CD4-positive, alpha-beta T cell (primary cell): ENCODE measurements at regions of chr11 and their contacts with region 1.

Region 1: GRCh38 chr11:67353317-67354074 is at the start of gene POLD4:
- DNase-seq: peak; percentile 90 to 98 (median 96)
- ATAC-seq: peak; percentile 84
- H3K4me3 ChIP-seq: peak within 1 kb of the TSS; percentile 78
- H3K4me3 Mint-ChIP-seq: peak within 1 kb of the TSS; percentile 98
- H3K27ac ChIP-seq: peak within 1 kb of the TSS; percentile 94 to 100
- H3K27ac Mint-ChIP-seq: peak within 1 kb of the TSS; percentile 99
- H3K4me1 ChIP-seq: peaks cover 67% of the 10 kb centered on the region
- H3K4me1 Mint-ChIP-seq: peaks cover 59% of the 10 kb centered on the region
- H3K27me3 ChIP-seq: no peaks in the 10 kb centered on the region
- H3K27me3 Mint-ChIP-seq: no peaks in the 10 kb centered on the region
- CTCF ChIP-seq: no peak
- total RNA-seq, gene POLD4: 31.7 to 39.5 TPM

Region 2: DNA sequence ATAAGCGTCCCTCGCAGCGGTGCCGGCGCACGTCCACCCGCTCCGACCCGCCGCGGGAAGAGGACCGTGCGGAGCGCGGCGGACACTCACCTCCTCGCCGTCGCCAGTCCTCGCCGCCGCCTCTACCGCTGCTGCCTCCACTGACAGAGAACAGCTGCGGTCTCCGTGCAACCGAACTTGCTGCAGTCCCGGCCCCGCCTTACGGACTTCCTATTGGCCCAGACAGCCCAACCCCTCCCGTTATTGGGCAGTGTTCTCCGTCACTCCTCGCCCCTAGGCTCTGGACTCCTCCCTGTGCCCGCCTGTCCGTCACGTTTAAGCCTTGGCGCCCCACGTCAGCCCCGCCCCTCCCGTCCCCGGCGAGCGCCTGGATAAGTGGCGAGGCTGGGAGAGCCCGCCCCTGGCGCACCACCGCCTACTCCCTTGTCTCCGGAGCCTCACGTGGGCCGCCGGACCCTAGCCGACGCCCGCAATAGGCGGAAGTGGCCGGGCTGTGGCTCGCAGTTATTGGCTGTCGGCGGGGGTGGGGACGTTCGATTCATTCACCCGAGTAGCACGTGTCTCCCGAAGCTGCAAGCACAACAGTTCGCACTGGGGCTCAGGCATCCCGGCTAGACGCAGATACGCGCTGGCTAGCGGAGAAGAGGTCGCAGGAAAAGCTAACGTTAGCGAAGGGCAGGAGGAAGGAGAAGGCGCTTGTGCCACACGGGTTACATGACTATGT is 395.1 kb before region 1 on chr11 and contains the start of gene PC:
- CTCF ChIA-PET with region 1: no interaction called
- POLR2A ChIA-PET with region 1: no interaction called
- intact Hi-C with region 1: loop called in 1 of 2 experiments (anchors 10 kb)
- DNase-seq: peak; percentile 91 to 99 (median 96)
- ATAC-seq: peak; percentile 96
- H3K4me3 ChIP-seq: peak within 1 kb of the TSS; percentile 57
- H3K4me3 Mint-ChIP-seq: peak within 1 kb of the TSS; percentile 91
- H3K27ac ChIP-seq: peak within 1 kb of the TSS; percentile 33 to 41
- H3K27ac Mint-ChIP-seq: peak within 1 kb of the TSS; percentile 71
- H3K4me1 ChIP-seq: peaks cover 20% of the 10 kb centered on the region
- H3K4me1 Mint-ChIP-seq: peaks cover 21% of the 10 kb centered on the region
- H3K27me3 ChIP-seq: no peaks in the 10 kb centered on the region
- H3K27me3 Mint-ChIP-seq: no peaks in the 10 kb centered on the region
- CTCF ChIP-seq: no peak
- total RNA-seq, gene PC: 5.1 to 7.1 TPM

Region 3: GRCh38 chr11:67020949-67021348 is 332.5 kb before region 1 on chr11:
- CTCF ChIA-PET with region 1: no interaction called
- POLR2A ChIA-PET with region 1: no interaction called
- intact Hi-C with region 1: no loop called
- DNase-seq: no peak
- ATAC-seq: no peak
- H3K4me3 ChIP-seq: no peak overlapping the region
- H3K4me3 Mint-ChIP-seq: peak overlapping the region; percentile 38
- H3K27ac ChIP-seq: no peak overlapping the region
- H3K27ac Mint-ChIP-seq: no peak overlapping the region
- H3K4me1 ChIP-seq: peaks cover 34% of the 10 kb centered on the region
- H3K4me1 Mint-ChIP-seq: peaks cover 32% of the 10 kb centered on the region
- H3K27me3 ChIP-seq: peaks cover 26 to 34% of the 10 kb centered on the region in 2 experiments
- H3K27me3 Mint-ChIP-seq: peaks cover 46% of the 10 kb centered on the region
- CTCF ChIP-seq: no peak

Region 4: GRCh38 chr11:67303132-67303834 is 50.2 kb before region 1 on chr11 and contains the start of gene SSH3:
- CTCF ChIA-PET with region 1: no interaction called
- POLR2A ChIA-PET with region 1: interaction called, 14 read pairs
- intact Hi-C with region 1: no loop called
- DNase-seq: peak in 8 of 14 experiments; percentile 30 to 66 (median 48)
- ATAC-seq: peak; percentile 62
- H3K4me3 ChIP-seq: peak within 1 kb of the TSS; percentile 62
- H3K4me3 Mint-ChIP-seq: peak within 1 kb of the TSS; percentile 65
- H3K27ac ChIP-seq: peak within 1 kb of the TSS in 1 of 2 donors; percentile 41
- H3K27ac Mint-ChIP-seq: no peak within 1 kb of the TSS
- H3K4me1 ChIP-seq: peaks cover 33% of the 10 kb centered on the region
- H3K4me1 Mint-ChIP-seq: peaks cover 5% of the 10 kb centered on the region
- H3K27me3 ChIP-seq: no peaks in the 10 kb centered on the region
- H3K27me3 Mint-ChIP-seq: no peaks in the 10 kb centered on the region
- CTCF ChIP-seq: no peak
- total RNA-seq, gene SSH3: 8.5 to 8.8 TPM

Region 5: DNA sequence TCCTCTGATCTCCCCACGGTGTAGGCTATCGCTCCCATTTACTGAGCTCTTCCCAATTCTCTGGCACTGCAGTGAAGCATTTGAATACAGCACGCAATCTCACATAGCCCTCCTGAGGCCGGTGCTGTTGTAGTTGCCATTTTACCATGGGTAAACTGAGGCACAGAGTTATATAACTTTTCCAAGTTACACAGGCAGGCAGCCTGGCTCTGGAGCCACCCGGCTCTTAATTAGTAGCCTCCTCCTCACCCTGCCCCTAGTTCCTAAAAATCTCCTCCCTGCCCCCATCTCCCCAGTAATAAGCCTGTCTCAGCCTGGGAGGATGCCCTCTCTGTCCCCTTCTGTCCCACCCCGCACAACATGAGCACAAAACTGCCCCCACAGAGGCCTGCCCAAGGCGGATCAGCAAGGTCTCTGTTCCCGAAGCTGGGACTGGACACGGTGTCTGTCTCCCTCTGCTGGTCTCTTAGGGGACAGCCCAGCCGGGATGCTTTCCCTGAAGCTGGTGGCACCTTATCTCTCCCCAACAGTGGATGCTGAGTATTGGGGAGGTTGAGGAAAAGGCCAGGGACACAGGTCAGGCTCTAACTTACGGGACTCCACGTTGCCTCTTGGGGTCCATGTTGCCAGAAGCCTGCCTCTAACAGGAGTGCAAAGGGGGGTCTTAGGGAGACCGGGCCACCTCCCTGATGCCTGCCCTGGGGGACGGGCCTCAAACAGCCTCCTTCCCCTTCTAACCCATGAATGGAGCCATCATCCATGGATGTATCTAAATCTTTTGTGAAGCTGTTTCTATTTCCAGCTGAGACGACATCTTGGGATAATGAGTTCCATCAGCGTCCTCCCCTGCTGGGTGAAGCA is 29.0 kb after region 1 on chr11:
- CTCF ChIA-PET with region 1: interaction called, 241 read pairs
- POLR2A ChIA-PET with region 1: interaction called, 56 read pairs
- intact Hi-C with region 1: loop called (anchors 1 kb)
- DNase-seq: peak; percentile 72 to 90 (median 82)
- ATAC-seq: peak; percentile 99
- H3K4me3 ChIP-seq: no peak overlapping the region
- H3K4me3 Mint-ChIP-seq: no peak overlapping the region
- H3K27ac ChIP-seq: no peak overlapping the region
- H3K27ac Mint-ChIP-seq: no peak overlapping the region
- H3K4me1 ChIP-seq: peaks cover 15% of the 10 kb centered on the region
- H3K4me1 Mint-ChIP-seq: peaks cover 5% of the 10 kb centered on the region
- H3K27me3 ChIP-seq: no peaks in the 10 kb centered on the region
- H3K27me3 Mint-ChIP-seq: peaks cover 4% of the 10 kb centered on the region
- CTCF ChIP-seq: peak; percentile 92

Region 6: DNA sequence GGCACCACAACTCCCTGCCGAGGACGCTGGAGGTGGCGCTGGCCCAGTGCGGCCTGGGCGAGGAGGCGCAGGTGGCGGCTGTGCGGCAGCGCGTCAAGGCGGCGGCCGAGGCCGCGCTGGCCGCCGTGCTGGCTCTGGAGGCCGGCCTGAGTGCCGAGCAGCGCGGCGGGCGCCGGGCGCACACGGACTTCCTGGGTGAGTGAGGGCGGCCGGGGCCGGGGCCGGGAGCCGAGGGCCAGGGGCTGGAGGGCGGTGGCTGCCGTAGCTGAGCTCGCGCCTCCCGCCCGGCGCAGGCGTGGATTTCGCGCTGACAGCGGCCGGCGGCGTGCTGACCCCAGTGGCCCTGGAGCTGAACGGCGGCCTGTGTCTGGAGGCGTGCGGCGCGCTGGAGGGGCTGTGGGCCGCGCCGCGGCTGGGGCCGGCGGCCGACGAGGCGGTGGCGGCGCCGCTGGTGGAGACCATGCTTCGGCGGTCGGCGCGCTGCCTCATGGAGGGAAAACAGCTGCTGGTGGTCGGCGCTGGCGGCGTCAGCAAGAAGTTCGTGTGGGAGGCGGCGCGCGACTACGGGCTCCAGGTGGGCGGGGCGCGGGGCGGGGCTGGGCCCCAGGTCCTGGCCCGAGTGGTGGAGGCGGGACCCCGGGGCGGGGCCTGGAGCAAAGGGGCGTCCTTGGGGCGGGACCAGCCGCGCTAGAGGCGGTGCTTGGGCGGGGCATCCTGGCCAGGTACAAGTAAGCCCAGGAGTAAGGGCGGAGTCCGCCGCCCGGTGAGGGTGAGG is 67.3 kb after region 1 on chr11:
- CTCF ChIA-PET with region 1: interaction called, 3 read pairs
- POLR2A ChIA-PET with region 1: interaction called, 6 read pairs
- intact Hi-C with region 1: loop called in 1 of 2 experiments (anchors 2 kb)
- DNase-seq: peak; percentile 97 to 100 (median 99)
- ATAC-seq: peak; percentile 79
- H3K4me3 ChIP-seq: peak overlapping the region; percentile 50
- H3K4me3 Mint-ChIP-seq: peak overlapping the region; percentile 86
- H3K27ac ChIP-seq: peak overlapping the region; percentile 15 to 79
- H3K27ac Mint-ChIP-seq: peak overlapping the region; percentile 94
- H3K4me1 ChIP-seq: peaks cover 57% of the 10 kb centered on the region
- H3K4me1 Mint-ChIP-seq: peaks cover 56% of the 10 kb centered on the region
- H3K27me3 ChIP-seq: no peaks in the 10 kb centered on the region
- H3K27me3 Mint-ChIP-seq: no peaks in the 10 kb centered on the region
- CTCF ChIP-seq: no peak

Region 7: DNA sequence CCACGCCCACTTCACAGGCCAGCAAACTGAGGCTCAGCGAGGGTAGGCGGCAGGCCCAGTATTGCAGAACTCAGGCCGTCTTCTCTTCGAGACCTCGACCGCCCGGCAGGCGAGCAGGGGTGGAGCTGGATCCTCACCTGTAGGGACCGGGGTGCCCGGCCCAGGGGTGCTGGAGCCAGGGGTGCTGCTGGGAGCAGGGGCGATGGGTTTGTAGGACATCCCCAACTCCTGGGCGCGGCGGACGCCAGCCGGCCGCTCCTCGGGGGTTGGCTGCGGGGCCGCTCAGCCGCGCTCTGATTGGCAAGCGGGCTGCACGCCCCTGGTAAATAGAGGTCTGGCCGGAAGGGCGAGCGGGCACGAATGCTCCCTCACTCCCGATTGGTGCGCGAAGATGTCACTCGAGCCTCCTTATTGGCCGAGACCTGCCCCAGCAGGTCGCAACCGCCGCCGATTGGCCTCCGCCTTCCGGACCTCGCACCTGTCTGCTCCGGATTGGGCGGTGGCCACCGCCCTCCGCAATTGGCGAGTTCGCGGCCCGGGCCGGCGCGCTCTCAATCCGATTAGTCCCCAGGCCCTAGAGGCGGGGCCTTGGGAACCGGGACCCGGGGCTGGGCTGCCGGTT is 154.5 kb after region 1 on chr11 and contains the start of gene CDK2AP2:
- CTCF ChIA-PET with region 1: interaction called, 4 read pairs
- POLR2A ChIA-PET with region 1: interaction called, 6 read pairs
- intact Hi-C with region 1: loop called (anchors 1 to 2 kb)
- DNase-seq: peak; percentile 91 to 99 (median 97)
- ATAC-seq: peak; percentile 71
- H3K4me3 ChIP-seq: peak within 1 kb of the TSS; percentile 76
- H3K4me3 Mint-ChIP-seq: peak within 1 kb of the TSS; percentile 93
- H3K27ac ChIP-seq: peak within 1 kb of the TSS; percentile 87 to 97
- H3K27ac Mint-ChIP-seq: peak within 1 kb of the TSS; percentile 98
- H3K4me1 ChIP-seq: peaks cover 50% of the 10 kb centered on the region
- H3K4me1 Mint-ChIP-seq: peaks cover 44% of the 10 kb centered on the region
- H3K27me3 ChIP-seq: peaks cover 0 to 9% of the 10 kb centered on the region in 2 experiments
- H3K27me3 Mint-ChIP-seq: no peaks in the 10 kb centered on the region
- CTCF ChIP-seq: no peak
- total RNA-seq, gene CDK2AP2: 19.5 to 22.0 TPM

Region 8: DNA sequence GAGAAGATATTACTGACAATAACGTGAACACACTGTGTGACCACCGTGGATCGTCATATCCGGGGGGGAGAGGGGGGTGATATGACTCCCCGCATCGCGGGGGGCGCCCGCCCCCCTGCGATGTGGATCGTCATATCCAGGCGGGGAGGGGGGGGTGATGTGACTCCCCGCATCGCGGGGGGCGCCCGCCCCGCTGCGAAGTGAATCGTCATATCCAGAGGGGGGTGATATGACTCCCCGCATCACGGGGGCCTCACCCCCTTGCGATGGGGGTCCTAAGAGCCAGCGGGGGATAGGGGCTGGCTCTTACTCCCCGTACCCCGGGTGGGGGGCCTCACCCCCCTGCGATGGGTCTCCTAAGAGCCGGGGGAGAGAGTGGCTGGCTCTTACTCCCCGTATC is 630.5 kb after region 1 on chr11:
- CTCF ChIA-PET with region 1: no interaction called
- POLR2A ChIA-PET with region 1: no interaction called
- intact Hi-C with region 1: no loop called
- DNase-seq: no peak
- ATAC-seq: no peak
- H3K4me3 ChIP-seq: no peak overlapping the region
- H3K4me3 Mint-ChIP-seq: no peak overlapping the region
- H3K27ac ChIP-seq: no peak overlapping the region
- H3K27ac Mint-ChIP-seq: no peak overlapping the region
- H3K4me1 ChIP-seq: no peaks in the 10 kb centered on the region
- H3K4me1 Mint-ChIP-seq: no peaks in the 10 kb centered on the region
- H3K27me3 ChIP-seq: no peaks in the 10 kb centered on the region
- H3K27me3 Mint-ChIP-seq: peaks cover 11% of the 10 kb centered on the region
- CTCF ChIP-seq: no peak